IMR-90 (cell line): ENCODE measurements at regions of chr1 and their contacts with region 1.

Region 1: DNA sequence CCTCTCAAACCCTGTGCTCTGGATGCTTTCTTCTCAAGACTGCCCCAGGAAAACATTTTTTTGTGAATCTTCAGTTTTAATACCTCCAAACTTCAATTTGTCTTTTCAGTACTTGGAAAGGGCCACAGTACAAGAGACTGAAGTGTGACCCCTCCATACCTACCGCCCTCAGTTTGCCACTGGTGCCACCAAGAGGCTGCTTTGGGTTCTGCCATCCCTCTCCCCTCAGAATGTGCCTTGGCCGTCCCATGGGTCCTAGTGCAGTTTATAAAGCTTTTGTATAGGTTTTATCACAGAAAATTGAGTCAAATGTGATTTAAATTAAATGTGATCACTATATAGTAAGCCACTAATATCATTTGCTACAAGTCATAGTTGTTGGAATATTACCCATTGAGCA is 60.8 kb upstream of the PGD start:
- DNase-seq: peak; percentile 34
- ATAC-seq: peak; percentile 85
- H3K4me3 ChIP-seq: no peak overlapping the region
- H3K27ac ChIP-seq: no peak overlapping the region
- H3K4me1 ChIP-seq: peaks cover 5% of the 10 kb centered on the region
- H3K27me3 ChIP-seq: no peaks in the 10 kb centered on the region
- CTCF ChIP-seq: peak; percentile 62
- POLR2A ChIP-seq: no peak
- RAD21 ChIP-seq: peak; percentile 71

Region 2: DNA sequence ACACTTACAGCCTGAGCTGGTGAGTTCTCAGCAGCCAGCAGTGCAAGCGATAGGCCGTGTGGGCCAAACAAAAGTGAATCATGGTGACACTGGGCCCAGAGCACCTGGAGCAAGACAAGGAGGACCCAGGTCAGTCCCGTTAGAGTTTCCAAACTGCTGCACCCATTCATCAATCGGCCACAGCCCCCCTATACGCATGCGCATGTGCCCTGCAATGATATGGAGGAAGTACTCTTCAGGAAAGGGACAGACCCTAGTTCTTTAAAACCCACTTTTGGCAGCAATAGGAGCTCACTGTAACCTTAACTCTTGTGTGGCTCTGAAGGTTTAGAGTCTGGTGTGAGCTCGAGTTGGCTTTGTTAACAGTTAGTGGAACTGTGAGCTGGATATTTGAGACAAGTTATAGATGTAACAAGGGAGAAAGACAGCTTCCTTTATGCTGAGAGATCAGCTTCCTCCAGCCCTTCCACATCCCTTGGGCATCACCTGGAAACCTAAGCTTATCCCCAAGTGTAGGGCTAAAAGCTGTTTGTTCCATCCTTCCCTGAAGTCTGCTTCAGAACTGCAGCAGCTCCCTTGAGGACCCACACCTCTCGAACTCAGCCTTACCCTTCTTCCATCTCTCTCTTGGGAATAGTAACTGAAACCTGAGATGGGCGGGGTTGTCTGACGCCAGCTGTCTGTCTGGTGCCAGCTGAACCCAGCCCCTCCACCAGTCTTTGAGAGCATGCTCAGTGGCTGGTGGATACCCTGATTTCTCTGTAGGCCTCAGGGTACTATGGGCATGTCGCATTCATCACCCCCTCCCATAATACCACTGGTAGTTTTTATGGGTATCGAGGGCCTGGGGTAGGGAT is 377.1 kb before region 1 on chr1:
- CTCF ChIA-PET with region 1: no interaction called
- POLR2A ChIA-PET with region 1: no interaction called
- dilution Hi-C with region 1: no loop called
- in situ Hi-C with region 1: no loop called
- intact Hi-C with region 1: loop called (anchors 10 kb)
- DNase-seq: no peak
- ATAC-seq: no peak
- H3K4me3 ChIP-seq: no peak overlapping the region
- H3K27ac ChIP-seq: no peak overlapping the region
- H3K4me1 ChIP-seq: peaks cover 2% of the 10 kb centered on the region; the same call in 1 of the 2 replicates
- H3K27me3 ChIP-seq: no peaks in the 10 kb centered on the region
- CTCF ChIP-seq: no peak
- POLR2A ChIP-seq: no peak
- RAD21 ChIP-seq: no peak

Region 3: GRCh38 chr1:10152709-10153284 is 185.2 kb before region 1 on chr1:
- CTCF ChIA-PET with region 1: no interaction called
- POLR2A ChIA-PET with region 1: no interaction called
- dilution Hi-C with region 1: no loop called
- in situ Hi-C with region 1: no loop called
- intact Hi-C with region 1: loop called (anchors 5 kb)
- DNase-seq: peak; percentile 48
- ATAC-seq: peak; percentile 79
- H3K4me3 ChIP-seq: no peak overlapping the region
- H3K27ac ChIP-seq: no peak overlapping the region
- H3K4me1 ChIP-seq: peaks cover 3% of the 10 kb centered on the region
- H3K27me3 ChIP-seq: no peaks in the 10 kb centered on the region
- CTCF ChIP-seq: peak; percentile 69
- POLR2A ChIP-seq: no peak
- RAD21 ChIP-seq: peak; percentile 82